Body of pancreas (tissue), 4 donors: ENCODE measurements at regions of chr6 and their contacts with region 1.

Region 1: GRCh38 chr6:97394160-97394748 is 111.2 kb upstream of the MMS22L start:
- DNase-seq: peak; percentile 42 to 57 (median 49)
- ATAC-seq: peak; percentile 80
- H3K4me3 ChIP-seq: no peak overlapping the region
- H3K27ac ChIP-seq: no peak overlapping the region
- H3K4me1 ChIP-seq: no peaks in the 10 kb centered on the region
- H3K27me3 ChIP-seq: no peaks in the 10 kb centered on the region
- CTCF ChIP-seq: peak; percentile 79 to 96 (median 83)
- POLR2A ChIP-seq: no peak

Region 2: GRCh38 chr6:97186416-97186999 is 207.7 kb before region 1 on chr6:
- intact Hi-C with region 1: loop called (anchors 10 kb)
- DNase-seq: peak; percentile 61 to 79 (median 70)
- ATAC-seq: peak; percentile 75
- H3K4me3 ChIP-seq: no peak overlapping the region
- H3K27ac ChIP-seq: no peak overlapping the region
- H3K4me1 ChIP-seq: no peaks in the 10 kb centered on the region
- H3K27me3 ChIP-seq: no peaks in the 10 kb centered on the region
- CTCF ChIP-seq: peak; percentile 52 to 87 (median 75)
- POLR2A ChIP-seq: no peak